Heart left ventricle (tissue), 16 donors: ENCODE measurements at regions of chr22 and their contacts with region 1.

Region 1: DNA sequence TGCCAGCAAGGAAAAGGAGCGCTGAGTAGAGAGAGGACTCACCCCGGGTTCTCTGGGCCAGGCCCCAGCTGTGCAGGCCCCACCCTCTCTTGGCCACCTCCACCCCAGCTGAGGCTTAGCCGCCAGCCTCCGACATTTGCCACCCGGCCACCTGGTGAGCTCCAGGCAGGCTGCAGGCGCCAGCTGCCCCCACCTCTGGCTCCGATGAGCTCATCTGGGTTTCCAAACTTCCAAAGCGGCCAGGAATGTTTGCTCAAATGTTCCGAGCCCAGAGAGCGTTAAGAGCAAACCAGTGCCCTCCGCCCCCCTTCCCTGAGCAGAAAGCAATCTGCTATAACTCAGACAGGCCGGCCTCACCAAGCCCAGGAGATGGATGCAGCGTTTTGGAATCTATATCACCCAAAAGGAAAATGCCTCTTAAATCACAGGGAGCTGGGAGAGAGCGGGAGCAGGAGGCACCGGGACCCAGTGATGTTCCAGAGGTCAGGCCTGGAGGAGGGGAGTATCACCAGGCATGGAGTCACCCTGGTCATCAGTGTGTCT is 9.1 kb upstream of the MN1 start:
- DNase-seq: peak in 4 of 5 donors; percentile 60 to 80 (median 67)
- ATAC-seq: peak; percentile 30 to 85 (median 76)
- H3K4me3 ChIP-seq: peak overlapping the region in 1 of 12 donors; percentile 6
- H3K27ac ChIP-seq: peak overlapping the region in 7 of 12 donors; percentile 3 to 65 (median 26)
- H3K4me1 ChIP-seq: peaks cover 0 to 17% (median 2%) of the 10 kb centered on the region in 12 donors
- H3K27me3 ChIP-seq: no peaks in the 10 kb centered on the region
- CTCF ChIP-seq: no peak
- POLR2A ChIP-seq: no peak

Region 2: DNA sequence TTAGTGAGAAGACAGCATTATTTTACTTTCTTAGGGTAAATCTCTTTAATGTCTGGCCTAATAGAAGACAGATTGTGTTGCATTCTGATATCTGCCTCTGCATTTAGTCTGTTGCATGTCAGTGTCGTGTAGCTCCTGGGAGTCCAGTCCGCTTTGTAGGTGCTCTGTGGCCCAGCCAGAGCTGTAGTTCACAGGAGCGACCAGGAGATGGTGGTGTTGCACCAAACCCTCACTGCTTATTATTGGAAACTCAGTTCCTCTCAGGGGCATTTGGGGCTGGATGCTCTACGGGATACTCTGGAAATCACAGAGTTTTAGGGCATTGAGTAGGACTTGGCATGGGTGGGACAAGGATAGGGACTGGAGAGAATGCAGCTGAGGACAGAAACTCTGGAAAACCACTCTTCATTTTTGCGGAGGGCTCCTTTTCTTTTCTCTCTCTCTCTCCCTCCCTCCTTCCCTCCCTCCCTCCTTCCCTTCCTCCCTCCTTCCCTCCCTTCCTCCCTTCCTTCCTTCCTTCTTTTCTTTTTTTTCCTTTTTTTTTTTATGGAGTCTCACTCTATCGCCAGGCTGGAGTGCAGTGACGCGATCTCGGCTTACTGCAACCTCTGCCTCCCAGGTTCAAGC is 1131.6 kb before region 1 on chr22:
- intact Hi-C with region 1: loop called in 3 of 10 experiments (anchors 5 to 10 kb)
- DNase-seq: peak; percentile 65 to 82 (median 67)
- ATAC-seq: peak; percentile 49 to 88 (median 80)
- H3K4me3 ChIP-seq: no peak overlapping the region
- H3K27ac ChIP-seq: no peak overlapping the region
- H3K4me1 ChIP-seq: peaks cover 0 to 30% (median 10%) of the 10 kb centered on the region in 12 donors
- H3K27me3 ChIP-seq: no peaks in the 10 kb centered on the region
- CTCF ChIP-seq: peak; percentile 88 to 98 (median 95)
- POLR2A ChIP-seq: no peak

Region 3: DNA sequence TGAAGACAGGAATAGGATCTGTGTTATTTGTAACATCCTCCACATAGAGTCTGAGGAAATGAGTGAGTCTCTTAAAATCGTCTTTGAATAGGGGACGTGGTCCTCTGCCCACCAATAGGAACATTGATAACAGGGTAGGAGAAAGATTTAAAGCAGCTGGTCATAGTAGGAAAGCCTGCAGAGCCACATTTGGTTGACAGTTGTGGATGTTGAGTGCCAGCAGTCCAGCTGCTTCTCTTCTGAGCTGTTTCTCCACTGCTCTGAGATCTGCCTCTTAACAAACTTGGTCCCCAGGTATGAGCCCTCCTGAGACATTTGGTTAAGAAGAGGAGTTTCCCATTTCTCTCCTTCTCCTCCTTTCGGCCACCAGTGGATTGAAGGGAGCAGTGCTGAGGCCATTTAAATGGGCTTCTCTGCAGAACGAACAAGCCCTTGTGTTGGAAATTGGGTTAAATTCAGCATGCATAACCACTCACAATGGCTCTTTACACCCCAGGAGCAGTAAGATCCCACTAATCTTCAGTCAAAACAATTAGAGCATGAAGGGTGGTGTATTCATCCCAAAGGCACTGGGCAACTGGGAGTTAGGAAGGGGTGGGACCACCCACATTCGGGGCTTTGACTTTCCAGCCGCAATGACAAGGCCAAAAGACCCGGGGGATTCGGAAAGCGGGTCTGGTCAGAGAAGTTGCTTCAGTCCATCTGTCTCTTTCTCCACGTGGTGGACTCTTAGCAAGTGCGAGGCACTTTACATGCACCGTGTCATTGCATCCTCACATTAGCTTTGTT is 1121.0 kb before region 1 on chr22:
- intact Hi-C with region 1: loop called in 1 of 10 experiments (anchors 5 kb)
- DNase-seq: no peak
- ATAC-seq: no peak
- H3K4me3 ChIP-seq: no peak overlapping the region
- H3K27ac ChIP-seq: no peak overlapping the region
- H3K4me1 ChIP-seq: peaks cover 0 to 15% (median 1%) of the 10 kb centered on the region in 12 donors
- H3K27me3 ChIP-seq: no peaks in the 10 kb centered on the region
- CTCF ChIP-seq: no peak
- POLR2A ChIP-seq: no peak

Region 4: GRCh38 chr22:27107824-27108223 is 702.9 kb before region 1 on chr22:
- intact Hi-C with region 1: loop called in 1 of 10 experiments (anchors 10 kb)
- DNase-seq: peak in 3 of 5 donors; percentile 70 to 78 (median 74)
- ATAC-seq: peak in 3 of 4 donors; percentile 30 to 82 (median 59)
- H3K4me3 ChIP-seq: no peak overlapping the region
- H3K27ac ChIP-seq: peak overlapping the region in 4 of 12 donors; percentile 13 to 77 (median 36)
- H3K4me1 ChIP-seq: peaks cover 0 to 36% (median 8%) of the 10 kb centered on the region in 12 donors
- H3K27me3 ChIP-seq: peaks cover 0 to 16% (median 2%) of the 10 kb centered on the region in 9 donors
- CTCF ChIP-seq: no peak
- POLR2A ChIP-seq: no peak

Region 5: GRCh38 chr22:27424319-27424718 is 386.4 kb before region 1 on chr22:
- intact Hi-C with region 1: no loop called
- DNase-seq: no peak
- ATAC-seq: no peak
- H3K4me3 ChIP-seq: no peak overlapping the region
- H3K27ac ChIP-seq: no peak overlapping the region
- H3K4me1 ChIP-seq: peaks cover 0 to 23% (median 16%) of the 10 kb centered on the region in 12 donors
- H3K27me3 ChIP-seq: peaks cover 0 to 1% (median 0%) of the 10 kb centered on the region in 9 donors
- CTCF ChIP-seq: no peak
- POLR2A ChIP-seq: no peak

Region 6: GRCh38 chr22:27647540-27647939 is 163.1 kb before region 1 on chr22:
- intact Hi-C with region 1: no loop called
- DNase-seq: no peak
- ATAC-seq: no peak
- H3K4me3 ChIP-seq: no peak overlapping the region
- H3K27ac ChIP-seq: no peak overlapping the region
- H3K4me1 ChIP-seq: peaks cover 0 to 16% (median 7%) of the 10 kb centered on the region in 12 donors
- H3K27me3 ChIP-seq: no peaks in the 10 kb centered on the region
- CTCF ChIP-seq: no peak
- POLR2A ChIP-seq: no peak